MCF 10A (cell line): ENCODE measurements at regions of chr3 and their contacts with region 1.

Region 1: GRCh38 chr3:63228087-63229023 is 49.8 kb upstream of the SYNPR start:
- DNase-seq: peak; percentile 60
- H3K4me3 Mint-ChIP-seq: no peak overlapping the region
- H3K27ac Mint-ChIP-seq: peak overlapping the region; percentile 59
- H3K4me1 Mint-ChIP-seq: peaks cover 12% of the 10 kb centered on the region
- H3K27me3 Mint-ChIP-seq: peaks cover 21% of the 10 kb centered on the region
- CTCF ChIP-seq: peak; percentile 57

Region 2: GRCh38 chr3:62332835-62333244 is 895.5 kb before region 1 on chr3:
- CTCF ChIA-PET with region 1: interaction called, 3 read pairs
- POLR2A ChIA-PET with region 1: no interaction called
- intact Hi-C with region 1: loop called (anchors 5 kb)
- DNase-seq: peak; percentile 30
- H3K4me3 Mint-ChIP-seq: no peak overlapping the region
- H3K27ac Mint-ChIP-seq: no peak overlapping the region
- H3K4me1 Mint-ChIP-seq: no peaks in the 10 kb centered on the region
- H3K27me3 Mint-ChIP-seq: peaks cover 83% of the 10 kb centered on the region
- CTCF ChIP-seq: peak; percentile 57

Region 3: DNA sequence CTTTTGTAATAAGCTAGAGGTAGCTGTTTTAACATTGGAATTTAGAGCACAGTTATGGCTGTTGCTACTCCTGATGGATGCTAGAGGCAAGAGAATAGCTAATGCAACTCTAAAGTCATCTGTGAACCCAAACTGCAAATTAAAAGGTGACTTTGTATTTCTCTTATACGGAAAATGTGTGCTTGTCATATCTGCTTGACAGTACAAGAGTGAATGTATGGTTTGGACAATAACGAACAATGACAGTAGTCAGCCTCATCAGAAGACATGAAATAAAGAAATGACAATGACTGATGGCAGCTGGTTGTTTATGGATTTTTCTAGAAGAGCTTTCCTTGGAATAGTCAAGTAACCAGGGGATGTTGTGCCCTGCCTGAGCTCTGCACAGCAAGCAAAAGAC is 686.2 kb before region 1 on chr3:
- CTCF ChIA-PET with region 1: no interaction called
- POLR2A ChIA-PET with region 1: no interaction called
- intact Hi-C with region 1: no loop called
- DNase-seq: no peak
- H3K4me3 Mint-ChIP-seq: no peak overlapping the region
- H3K27ac Mint-ChIP-seq: no peak overlapping the region
- H3K4me1 Mint-ChIP-seq: no peaks in the 10 kb centered on the region
- H3K27me3 Mint-ChIP-seq: peaks cover 99% of the 10 kb centered on the region
- CTCF ChIP-seq: no peak

Region 4: GRCh38 chr3:62622553-62623193 is 605.7 kb before region 1 on chr3:
- CTCF ChIA-PET with region 1: interaction called, 74 read pairs
- POLR2A ChIA-PET with region 1: no interaction called
- intact Hi-C with region 1: loop called (anchors 1 kb)
- DNase-seq: peak; percentile 68
- H3K4me3 Mint-ChIP-seq: no peak overlapping the region
- H3K27ac Mint-ChIP-seq: no peak overlapping the region
- H3K4me1 Mint-ChIP-seq: peaks cover 6% of the 10 kb centered on the region
- H3K27me3 Mint-ChIP-seq: no peaks in the 10 kb centered on the region
- CTCF ChIP-seq: peak; percentile 64

Region 5: GRCh38 chr3:62653796-62654195 is 574.6 kb before region 1 on chr3:
- CTCF ChIA-PET with region 1: interaction called, 339 read pairs
- POLR2A ChIA-PET with region 1: interaction called, 3 read pairs
- intact Hi-C with region 1: no loop called
- DNase-seq: no peak
- H3K4me3 Mint-ChIP-seq: no peak overlapping the region
- H3K27ac Mint-ChIP-seq: no peak overlapping the region
- H3K4me1 Mint-ChIP-seq: no peaks in the 10 kb centered on the region
- H3K27me3 Mint-ChIP-seq: no peaks in the 10 kb centered on the region
- CTCF ChIP-seq: no peak

Region 6: DNA sequence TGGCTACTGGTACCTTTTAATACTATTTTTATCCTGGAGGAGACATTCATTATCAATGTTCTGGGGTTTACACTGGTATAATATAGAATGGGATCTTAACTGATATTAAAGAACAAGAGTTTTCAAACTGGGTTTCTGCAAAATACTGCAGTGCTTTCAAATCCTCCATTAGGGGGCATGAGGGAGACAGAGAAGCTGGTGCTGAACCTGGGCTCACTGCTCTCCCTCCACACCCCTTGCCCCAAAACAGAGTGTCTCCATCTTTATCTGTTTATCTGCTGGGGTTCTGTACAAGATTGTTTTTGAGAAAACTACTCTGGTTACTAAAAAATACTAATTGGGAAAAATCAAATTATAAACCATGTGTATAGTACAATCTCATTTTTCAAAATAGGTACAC is 394.8 kb before region 1 on chr3:
- CTCF ChIA-PET with region 1: no interaction called
- POLR2A ChIA-PET with region 1: no interaction called
- intact Hi-C with region 1: loop called (anchors 1 kb)
- DNase-seq: peak; percentile 18
- H3K4me3 Mint-ChIP-seq: no peak overlapping the region
- H3K27ac Mint-ChIP-seq: no peak overlapping the region
- H3K4me1 Mint-ChIP-seq: peaks cover 5% of the 10 kb centered on the region
- H3K27me3 Mint-ChIP-seq: peaks cover 54% of the 10 kb centered on the region
- CTCF ChIP-seq: peak; percentile 47

Region 7: DNA sequence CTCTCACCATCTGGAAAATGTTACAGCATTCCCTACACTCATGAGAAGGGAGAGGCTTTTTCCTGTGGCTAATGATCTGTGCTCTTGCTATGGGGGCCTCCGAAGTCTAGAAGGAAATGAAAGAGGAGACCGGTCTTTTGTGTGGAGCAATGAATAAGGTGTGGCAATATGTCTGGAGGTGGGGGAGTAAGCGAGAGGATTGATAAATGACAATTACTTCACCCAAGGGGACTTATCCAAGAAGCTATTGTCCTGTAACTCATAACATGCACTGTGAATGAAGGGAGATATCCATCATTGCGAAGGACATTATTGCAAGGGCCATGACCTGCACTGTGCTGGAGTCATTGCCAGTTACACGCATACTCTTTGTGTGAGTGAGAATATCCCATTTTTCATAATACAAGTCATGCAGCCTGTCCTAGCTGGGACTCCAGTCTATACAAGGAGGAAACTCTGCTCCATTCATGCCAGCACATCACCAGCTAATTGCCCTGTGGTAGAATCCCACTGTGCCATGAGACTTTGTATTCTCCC is 12.1 kb after region 1 on chr3:
- CTCF ChIA-PET with region 1: interaction called, 26 read pairs
- POLR2A ChIA-PET with region 1: interaction called, 3 read pairs
- intact Hi-C with region 1: no loop called
- DNase-seq: no peak
- H3K4me3 Mint-ChIP-seq: no peak overlapping the region
- H3K27ac Mint-ChIP-seq: no peak overlapping the region
- H3K4me1 Mint-ChIP-seq: no peaks in the 10 kb centered on the region
- H3K27me3 Mint-ChIP-seq: peaks cover 87% of the 10 kb centered on the region
- CTCF ChIP-seq: no peak